K562 (cell line): ENCODE measurements at regions of chr1 and their contacts with region 1.

Region 1: DNA sequence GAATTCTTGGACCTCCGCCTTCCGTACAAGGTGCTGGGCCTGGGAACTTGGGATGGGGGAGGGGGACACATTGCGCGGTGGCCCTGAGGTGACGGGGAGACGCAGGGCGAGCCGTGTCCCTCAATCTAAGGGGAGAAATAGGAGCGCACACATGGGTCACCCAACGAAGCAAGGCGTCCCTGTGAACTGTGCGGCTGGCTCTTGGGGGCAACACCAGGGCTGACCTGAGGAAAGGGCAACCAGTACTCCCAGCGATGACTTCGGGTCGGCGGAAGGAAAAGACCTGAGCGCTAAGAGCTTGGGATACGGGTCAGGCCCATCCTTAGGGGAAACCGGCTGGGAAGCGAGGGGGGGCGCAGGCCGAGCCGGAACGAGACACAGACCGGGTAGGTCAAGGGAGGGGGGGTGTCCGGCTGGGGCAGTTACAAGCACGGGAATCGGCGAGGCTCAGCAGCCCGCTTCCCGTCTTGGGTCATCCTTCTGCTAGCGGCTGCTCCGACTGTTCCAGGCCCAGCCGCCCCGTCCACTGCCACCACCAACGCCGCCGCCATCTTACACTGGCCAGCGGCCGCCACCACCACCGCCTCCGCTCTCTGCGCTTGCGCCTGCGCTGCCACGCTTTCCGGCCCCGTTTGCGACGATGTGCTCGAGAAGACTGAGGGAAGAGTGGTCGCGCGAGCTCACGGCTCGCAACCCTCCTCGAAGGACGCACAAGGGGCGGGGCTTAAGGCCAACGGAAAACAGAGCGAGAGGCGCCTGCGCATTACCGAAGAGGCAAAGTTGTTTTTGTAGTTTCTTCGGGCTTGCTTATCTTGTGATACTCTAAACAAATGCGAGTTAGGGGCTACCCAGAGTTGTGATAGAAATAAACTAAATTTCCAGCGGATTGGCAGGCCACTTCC is at the start of gene DCAF8:
- DNase-seq: peak; percentile 93 to 99 (median 95)
- ATAC-seq: peak; percentile 94
- H3K4me3 ChIP-seq: peak within 1 kb of the TSS; percentile 77
- H3K27ac ChIP-seq: peak within 1 kb of the TSS; percentile 98
- H3K4me1 ChIP-seq: peaks cover 6 to 20% of the 10 kb centered on the region in 2 experiments; a peak in 4 of 5 replicates
- H3K27me3 ChIP-seq: no peaks in the 10 kb centered on the region
- CTCF ChIP-seq: no peak
- EP300 ChIP-seq: peak; percentile 6; the same call in 1 of the 2 replicates
- POLR2A ChIP-seq: peak; percentile 99
- RAD21 ChIP-seq: no peak
- polyA plus RNA-seq, gene DCAF8: 11.6 to 19.5 TPM

Region 2: GRCh38 chr1:159924981-159925712 is 337.0 kb before region 1 on chr1 and contains the start of gene TAGLN2:
- CTCF ChIA-PET with region 1: no interaction called
- POLR2A ChIA-PET with region 1: interaction called, 4 read pairs
- in situ Hi-C with region 1: no loop called
- intact Hi-C with region 1: loop called (anchors 10 kb)
- DNase-seq: peak; percentile 86 to 95 (median 91)
- ATAC-seq: peak; percentile 83
- H3K4me3 ChIP-seq: peak within 1 kb of the TSS; percentile 72
- H3K27ac ChIP-seq: peak within 1 kb of the TSS; percentile 100
- H3K4me1 ChIP-seq: peaks cover 28 to 77% of the 10 kb centered on the region in 2 experiments
- H3K27me3 ChIP-seq: no peaks in the 10 kb centered on the region
- CTCF ChIP-seq: no peak
- EP300 ChIP-seq: no peak
- POLR2A ChIP-seq: peak; percentile 98
- RAD21 ChIP-seq: no peak
- polyA plus RNA-seq, gene TAGLN2: 334 to 683 TPM

Region 3: GRCh38 chr1:160251687-160252526 is 10.2 kb before region 1 on chr1:
- CTCF ChIA-PET with region 1: no interaction called
- POLR2A ChIA-PET with region 1: interaction called, 31 read pairs
- in situ Hi-C with region 1: no loop called
- intact Hi-C with region 1: no loop called
- DNase-seq: peak; percentile 57 to 72 (median 65)
- ATAC-seq: peak; percentile 96
- H3K4me3 ChIP-seq: no peak overlapping the region
- H3K27ac ChIP-seq: no peak overlapping the region
- H3K4me1 ChIP-seq: no peaks in the 10 kb centered on the region; a peak in 1 of 5 replicates
- H3K27me3 ChIP-seq: no peaks in the 10 kb centered on the region
- CTCF ChIP-seq: peak; percentile 67 to 81 (median 74)
- EP300 ChIP-seq: no peak
- POLR2A ChIP-seq: no peak
- RAD21 ChIP-seq: peak; percentile 78 to 80

Region 4: GRCh38 chr1:160277330-160277729 is 15.2 kb after region 1 on chr1:
- CTCF ChIA-PET with region 1: no interaction called
- POLR2A ChIA-PET with region 1: interaction called, 16 read pairs
- in situ Hi-C with region 1: no loop called
- intact Hi-C with region 1: no loop called
- DNase-seq: no peak
- ATAC-seq: no peak
- H3K4me3 ChIP-seq: no peak overlapping the region
- H3K27ac ChIP-seq: no peak overlapping the region
- H3K4me1 ChIP-seq: no peaks in the 10 kb centered on the region
- H3K27me3 ChIP-seq: no peaks in the 10 kb centered on the region
- CTCF ChIP-seq: no peak
- EP300 ChIP-seq: no peak
- POLR2A ChIP-seq: no peak
- RAD21 ChIP-seq: no peak

Region 5: DNA sequence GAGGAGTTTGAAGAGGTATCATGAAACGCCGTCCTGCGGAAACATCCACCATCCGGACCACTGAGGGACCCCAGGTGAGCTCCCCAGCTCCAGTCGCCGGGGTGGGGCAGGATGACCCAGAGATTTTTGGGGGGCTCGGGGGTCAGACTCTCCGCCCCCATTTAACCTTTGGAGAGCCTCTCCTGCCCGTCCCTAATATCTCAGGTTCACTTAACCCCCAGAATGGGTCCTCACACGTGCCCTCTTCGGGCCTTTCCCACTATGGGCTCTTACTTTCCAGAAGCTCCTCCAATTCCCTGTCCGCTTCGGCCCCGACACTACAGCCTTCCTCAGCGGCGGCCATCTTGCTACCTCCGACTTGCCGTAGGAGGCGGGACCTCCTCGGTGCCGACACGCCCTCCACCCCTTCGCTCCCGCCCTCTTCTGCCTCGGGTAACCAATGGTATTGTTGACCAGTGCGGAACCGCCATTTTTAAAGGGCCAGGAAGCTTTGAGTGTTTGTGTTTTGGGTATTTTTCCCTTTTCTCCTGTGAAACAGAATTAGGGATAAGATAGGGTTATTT is 22.7 kb after region 1 on chr1 and contains the start of gene PEX19:
- CTCF ChIA-PET with region 1: no interaction called
- POLR2A ChIA-PET with region 1: interaction called, 19 read pairs
- in situ Hi-C with region 1: no loop called
- intact Hi-C with region 1: no loop called
- DNase-seq: peak; percentile 95 to 98 (median 96)
- ATAC-seq: peak; percentile 99
- H3K4me3 ChIP-seq: peak within 1 kb of the TSS; percentile 74
- H3K27ac ChIP-seq: peak within 1 kb of the TSS; percentile 72
- H3K4me1 ChIP-seq: peaks cover 5 to 14% of the 10 kb centered on the region in 2 experiments; a peak in 4 of 5 replicates
- H3K27me3 ChIP-seq: no peaks in the 10 kb centered on the region
- CTCF ChIP-seq: no peak
- EP300 ChIP-seq: peak; percentile 17; the same call in 1 of the 2 replicates
- POLR2A ChIP-seq: peak; percentile 93
- RAD21 ChIP-seq: no peak
- polyA plus RNA-seq, gene PEX19: 81.2 to 103 TPM